Heart left ventricle (tissue), 16 donors: ENCODE measurements at regions of chr11 and their contacts with region 1.

Region 1: DNA sequence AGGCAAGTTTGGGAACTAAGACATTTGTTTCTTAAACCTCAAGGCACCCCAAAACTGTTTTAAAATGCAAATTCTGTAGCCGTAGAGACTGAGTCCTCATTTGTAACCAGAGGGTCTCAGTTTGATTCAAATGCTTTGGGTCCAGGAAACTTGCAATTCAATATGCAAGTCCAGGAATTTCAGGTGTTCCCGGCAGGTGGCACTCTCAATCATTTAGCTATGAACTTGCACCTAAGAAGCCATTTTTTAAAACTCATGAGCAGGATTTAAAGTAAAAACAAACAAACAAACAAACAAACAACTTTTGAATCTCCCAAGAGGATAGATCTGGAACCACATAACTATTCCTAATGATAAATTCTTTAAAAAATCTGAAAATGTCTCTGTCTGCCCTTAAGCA is 8.7 kb upstream of the ABTB2 start:
- DNase-seq: no peak
- ATAC-seq: no peak
- H3K4me3 ChIP-seq: no peak overlapping the region
- H3K27ac ChIP-seq: no peak overlapping the region
- H3K4me1 ChIP-seq: peaks cover 0 to 6% (median 0%) of the 10 kb centered on the region in 12 donors
- H3K27me3 ChIP-seq: peaks cover 0 to 6% (median 0%) of the 10 kb centered on the region in 9 donors
- CTCF ChIP-seq: peak in 6 of 12 donors; percentile 17 to 42 (median 34)
- POLR2A ChIP-seq: no peak

Region 2: DNA sequence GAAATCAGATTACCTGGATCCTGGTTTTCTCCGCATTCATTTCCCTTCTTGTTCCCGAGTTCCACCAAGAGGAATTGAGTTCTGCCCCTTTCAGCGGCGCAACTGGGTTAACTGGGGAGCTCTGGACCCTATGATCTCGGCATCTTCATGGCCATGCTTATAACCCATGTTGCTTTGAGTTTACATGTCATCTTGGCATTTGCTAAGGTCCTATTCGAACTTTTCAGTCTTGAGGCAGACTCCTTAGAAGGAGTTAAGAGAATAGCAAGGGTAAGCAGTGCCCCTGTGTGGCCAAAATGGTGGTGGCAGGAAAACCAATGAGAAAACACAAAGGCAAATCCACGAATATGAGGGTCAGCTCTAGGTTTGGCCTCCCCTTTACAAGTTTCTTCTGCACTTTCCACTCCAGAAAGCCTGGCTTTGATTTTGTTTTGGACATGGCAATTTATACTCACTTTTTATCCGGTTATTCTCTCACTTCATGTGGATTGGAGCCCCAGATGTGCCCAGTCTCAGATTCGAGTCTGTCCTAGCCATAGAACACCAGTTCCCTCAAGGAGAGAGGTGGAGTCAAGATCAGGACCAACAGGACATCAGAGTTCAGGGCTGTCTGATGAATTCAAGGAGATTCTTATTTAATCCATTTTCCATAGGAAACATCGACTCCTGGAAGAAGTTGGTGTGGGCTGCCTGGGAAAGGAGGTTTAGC is 536.9 kb before region 1 on chr11:
- intact Hi-C with region 1: loop called in 1 of 10 experiments (anchors 10 kb)
- DNase-seq: peak in 4 of 5 donors; percentile 35 to 52 (median 46)
- ATAC-seq: peak in 3 of 4 donors; percentile 82 to 91 (median 86)
- H3K4me3 ChIP-seq: peak overlapping the region; percentile 21 to 58 (median 49)
- H3K27ac ChIP-seq: no peak overlapping the region
- H3K4me1 ChIP-seq: peaks cover 3 to 10% (median 7%) of the 10 kb centered on the region in 12 donors
- H3K27me3 ChIP-seq: peaks cover 0 to 49% (median 11%) of the 10 kb centered on the region in 9 donors
- CTCF ChIP-seq: peak; percentile 56 to 85 (median 76)
- POLR2A ChIP-seq: no peak

Region 3: GRCh38 chr11:33987975-33988580 is 378.4 kb before region 1 on chr11:
- intact Hi-C with region 1: loop called in 1 of 10 experiments (anchors 5 kb)
- DNase-seq: peak; percentile 60 to 77 (median 71)
- ATAC-seq: peak in 3 of 4 donors; percentile 84 to 88 (median 86)
- H3K4me3 ChIP-seq: no peak overlapping the region
- H3K27ac ChIP-seq: no peak overlapping the region
- H3K4me1 ChIP-seq: no peaks in the 10 kb centered on the region
- H3K27me3 ChIP-seq: no peaks in the 10 kb centered on the region
- CTCF ChIP-seq: peak; percentile 67 to 92 (median 82)
- POLR2A ChIP-seq: no peak